ENCODE measurements at regions of chr6 and their contacts with region 1.

Region 1: DNA sequence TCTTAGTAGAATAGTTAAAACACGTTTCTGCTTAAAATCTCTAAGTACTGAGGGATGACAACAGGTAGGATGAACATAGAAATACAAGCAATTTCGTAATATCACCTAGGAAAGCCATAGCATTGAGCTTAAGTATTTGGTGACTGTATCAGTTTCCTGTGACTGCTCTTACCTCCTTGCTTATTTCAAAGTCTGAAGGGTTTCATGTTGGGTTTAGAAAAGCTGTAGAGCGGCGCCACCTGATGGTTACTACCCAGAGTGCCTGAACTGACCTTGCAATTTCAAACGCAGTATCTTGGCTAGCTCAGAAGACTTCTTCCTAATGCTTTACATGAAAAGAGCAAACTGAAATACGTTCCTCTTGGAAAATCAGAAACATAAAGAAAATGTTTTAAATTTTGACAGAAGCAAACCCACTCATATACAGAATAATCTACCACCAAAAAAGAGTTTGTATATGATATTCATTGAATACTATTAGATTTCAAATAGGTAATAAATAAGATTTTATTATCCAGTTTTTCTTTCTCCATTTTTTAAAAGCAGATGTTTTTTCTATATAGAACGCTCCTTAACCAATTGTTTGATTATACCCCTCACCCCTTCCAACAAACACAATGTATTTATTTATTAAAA is 82.3 kb upstream of the RIPOR2 start:
- DNase-seq: peak; percentile 55 to 92 (median 80)
- ATAC-seq: peak; percentile 76 to 95 (median 91)
- H3K4me3 ChIP-seq: no peak overlapping the region
- H3K4me3 Mint-ChIP-seq: peak overlapping the region in 2 of 3 donors; percentile 34 to 63
- H3K27ac ChIP-seq: peak overlapping the region; percentile 33
- H3K27ac Mint-ChIP-seq: peak overlapping the region; percentile 87 to 91
- H3K4me1 ChIP-seq: peaks cover 17 to 24% of the 10 kb centered on the region in 2 experiments
- H3K4me1 Mint-ChIP-seq: peaks cover 39 to 48% (median 44%) of the 10 kb centered on the region in 3 donors
- H3K27me3 ChIP-seq: no peaks in the 10 kb centered on the region
- H3K27me3 Mint-ChIP-seq: no peaks in the 10 kb centered on the region

Region 2: GRCh38 chr6:24581084-24581669 is 436.9 kb before region 1 on chr6:
- CTCF ChIA-PET with region 1: interaction called, 5 to 10 read pairs
- POLR2A ChIA-PET with region 1: no interaction called
- DNase-seq: peak; percentile 37 to 85 (median 71)
- ATAC-seq: peak; percentile 84 to 91 (median 90)
- H3K4me3 ChIP-seq: no peak overlapping the region
- H3K4me3 Mint-ChIP-seq: no peak overlapping the region
- H3K27ac ChIP-seq: no peak overlapping the region
- H3K27ac Mint-ChIP-seq: no peak overlapping the region
- H3K4me1 ChIP-seq: no peaks in the 10 kb centered on the region
- H3K4me1 Mint-ChIP-seq: peaks cover 2 to 10% (median 3%) of the 10 kb centered on the region in 3 donors
- H3K27me3 ChIP-seq: no peaks in the 10 kb centered on the region
- H3K27me3 Mint-ChIP-seq: peaks cover 2 to 6% of the 10 kb centered on the region in 2 donors

Region 3: GRCh38 chr6:24855395-24856245 is 162.4 kb before region 1 on chr6:
- CTCF ChIA-PET with region 1: interaction called, 7 to 151 read pairs
- POLR2A ChIA-PET with region 1: interaction called in 1 of 2 experiments, 6 read pairs
- DNase-seq: peak in 34 of 35 experiments; percentile 47 to 90 (median 64)
- ATAC-seq: peak; percentile 32 to 59 (median 50)
- H3K4me3 ChIP-seq: no peak overlapping the region
- H3K4me3 Mint-ChIP-seq: peak overlapping the region in 1 of 3 donors; percentile 73
- H3K27ac ChIP-seq: peak overlapping the region; percentile 76
- H3K27ac Mint-ChIP-seq: peak overlapping the region; percentile 95 to 99
- H3K4me1 ChIP-seq: peaks cover 42 to 47% of the 10 kb centered on the region in 2 experiments
- H3K4me1 Mint-ChIP-seq: peaks cover 52 to 72% (median 59%) of the 10 kb centered on the region in 3 donors
- H3K27me3 ChIP-seq: no peaks in the 10 kb centered on the region
- H3K27me3 Mint-ChIP-seq: no peaks in the 10 kb centered on the region

Region 4: GRCh38 chr6:24899997-24900325 is 118.1 kb before region 1 on chr6:
- CTCF ChIA-PET with region 1: interaction called, 3 to 14 read pairs
- POLR2A ChIA-PET with region 1: interaction called in 1 of 2 experiments, 4 read pairs
- DNase-seq: peak in 29 of 35 experiments; percentile 9 to 63 (median 37)
- ATAC-seq: peak; percentile 26 to 79 (median 35)
- H3K4me3 ChIP-seq: peak overlapping the region in 1 of 2 donors; percentile 34
- H3K4me3 Mint-ChIP-seq: peak overlapping the region; percentile 43 to 54 (median 54)
- H3K27ac ChIP-seq: peak overlapping the region; percentile 60
- H3K27ac Mint-ChIP-seq: peak overlapping the region; percentile 91 to 92
- H3K4me1 ChIP-seq: peaks cover 41 to 73% of the 10 kb centered on the region in 2 experiments
- H3K4me1 Mint-ChIP-seq: peaks cover 88 to 95% (median 94%) of the 10 kb centered on the region in 3 donors
- H3K27me3 ChIP-seq: no peaks in the 10 kb centered on the region
- H3K27me3 Mint-ChIP-seq: no peaks in the 10 kb centered on the region

Region 5: GRCh38 chr6:25006565-25007001 is 11.5 kb before region 1 on chr6:
- CTCF ChIA-PET with region 1: interaction called, 3 to 26 read pairs
- POLR2A ChIA-PET with region 1: interaction called in 1 of 2 experiments, 3 read pairs
- DNase-seq: peak in 16 of 35 experiments; percentile 7 to 54 (median 20)
- ATAC-seq: peak; percentile 72 to 80 (median 75)
- H3K4me3 ChIP-seq: peak overlapping the region in 1 of 2 donors; percentile 20
- H3K4me3 Mint-ChIP-seq: peak overlapping the region in 2 of 3 donors; percentile 38 to 68
- H3K27ac ChIP-seq: peak overlapping the region; percentile 84
- H3K27ac Mint-ChIP-seq: peak overlapping the region; percentile 88 to 91
- H3K4me1 ChIP-seq: peaks cover 49 to 61% of the 10 kb centered on the region in 2 experiments
- H3K4me1 Mint-ChIP-seq: peaks cover 79 to 99% (median 80%) of the 10 kb centered on the region in 3 donors
- H3K27me3 ChIP-seq: no peaks in the 10 kb centered on the region
- H3K27me3 Mint-ChIP-seq: no peaks in the 10 kb centered on the region

Region 6: DNA sequence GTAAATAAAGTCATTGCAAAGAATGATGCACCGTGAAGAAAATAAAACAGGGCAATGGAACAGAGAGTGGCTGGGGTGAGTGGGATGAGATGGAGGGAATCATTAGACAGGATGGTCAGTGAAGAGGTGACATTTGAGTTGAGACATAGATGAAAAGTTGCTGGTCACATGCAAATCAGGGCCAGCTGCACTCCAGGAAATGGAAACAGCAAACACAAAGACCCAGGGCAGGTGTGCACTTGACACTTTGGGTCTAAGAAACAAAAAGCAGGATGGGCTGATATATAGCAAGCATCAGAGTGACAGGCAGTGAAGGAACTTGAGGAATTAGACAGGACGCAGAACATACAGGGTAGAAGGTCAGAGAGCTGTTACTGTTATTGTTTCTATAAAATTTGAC is 89.2 kb after region 1 on chr6:
- CTCF ChIA-PET with region 1: no interaction called
- POLR2A ChIA-PET with region 1: no interaction called
- DNase-seq: no peak
- ATAC-seq: no peak
- H3K4me3 ChIP-seq: no peak overlapping the region
- H3K4me3 Mint-ChIP-seq: no peak overlapping the region
- H3K27ac ChIP-seq: no peak overlapping the region
- H3K27ac Mint-ChIP-seq: peak overlapping the region in 1 of 2 donors; percentile 8
- H3K4me1 ChIP-seq: no peaks in the 10 kb centered on the region
- H3K4me1 Mint-ChIP-seq: peaks cover 0 to 2% (median 0%) of the 10 kb centered on the region in 3 donors
- H3K27me3 ChIP-seq: no peaks in the 10 kb centered on the region
- H3K27me3 Mint-ChIP-seq: no peaks in the 10 kb centered on the region

Region 7: GRCh38 chr6:25278914-25279747 is 261.1 kb after region 1 on chr6 and contains the start of gene CARMIL1:
- CTCF ChIA-PET with region 1: no interaction called
- POLR2A ChIA-PET with region 1: no interaction called
- DNase-seq: peak; percentile 17 to 80 (median 52)
- ATAC-seq: peak; percentile 75 to 82 (median 78)
- H3K4me3 ChIP-seq: peak within 1 kb of the TSS; percentile 67 to 88
- H3K4me3 Mint-ChIP-seq: peak within 1 kb of the TSS; percentile 85 to 90 (median 88)
- H3K27ac ChIP-seq: peak within 1 kb of the TSS; percentile 0
- H3K27ac Mint-ChIP-seq: peak within 1 kb of the TSS; percentile 68 to 75
- H3K4me1 ChIP-seq: peaks cover 14 to 22% of the 10 kb centered on the region in 2 experiments
- H3K4me1 Mint-ChIP-seq: peaks cover 30 to 35% (median 30%) of the 10 kb centered on the region in 3 donors
- H3K27me3 ChIP-seq: peaks cover 0 to 5% of the 10 kb centered on the region in 2 experiments
- H3K27me3 Mint-ChIP-seq: peaks cover 0 to 6% of the 10 kb centered on the region in 2 donors
- total RNA-seq, gene CARMIL1: 4.0 to 11.6 (median 6.1) TPM

Measured in T-cell (primary cell).